ENCODE measurements at regions of chr19 and their contacts with region 1.

Region 1: DNA sequence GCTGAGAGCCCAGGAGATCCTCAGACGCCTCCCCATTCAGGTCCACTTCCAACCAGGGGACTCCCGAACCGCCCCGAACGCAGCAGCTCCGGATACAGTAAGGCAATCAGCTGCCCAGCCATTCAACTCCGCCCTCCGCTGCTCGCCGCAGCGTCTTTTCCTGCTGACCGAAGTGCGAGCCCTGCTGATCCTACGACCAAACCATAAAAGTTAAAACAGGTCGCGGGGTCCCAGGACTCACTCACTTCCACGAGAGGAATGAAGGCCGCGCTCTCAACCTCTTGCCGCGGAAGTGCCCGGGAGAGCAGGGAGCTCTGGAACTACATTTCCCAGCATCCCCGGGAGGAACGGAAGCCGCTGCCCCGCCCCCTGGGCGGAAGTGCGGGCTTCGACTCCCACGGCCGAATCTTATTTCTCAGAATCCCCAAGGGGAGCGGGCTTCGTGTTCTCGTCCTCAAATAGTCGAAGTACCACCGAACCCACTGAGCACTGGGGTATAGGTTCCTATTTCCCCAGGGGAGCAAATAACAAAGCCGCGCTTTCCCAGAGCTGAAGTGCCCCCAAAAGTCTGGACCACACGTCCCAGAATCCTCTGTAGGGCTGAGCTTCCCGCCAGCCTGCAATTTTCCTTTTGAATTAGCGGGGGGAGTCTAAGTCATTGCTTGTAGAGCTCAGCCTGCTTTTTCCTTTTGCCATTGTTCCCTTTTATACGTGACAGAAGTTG is at the start of gene ZNF45:
- DNase-seq: peak; percentile 85
- ATAC-seq: peak; percentile 97
- H3K4me3 ChIP-seq: peak within 1 kb of the TSS; percentile 59
- H3K27ac ChIP-seq: peak within 1 kb of the TSS; percentile 85
- H3K4me1 ChIP-seq: no peaks in the 10 kb centered on the region
- H3K27me3 ChIP-seq: no peaks in the 10 kb centered on the region
- CTCF ChIP-seq: no peak
- POLR2A ChIP-seq: no peak
- RAD21 ChIP-seq: peak; percentile 23; the same call in 1 of the 2 replicates
- total RNA-seq, gene ZNF45: 15.0 and 18.1 TPM in 2 replicates

Region 2: DNA sequence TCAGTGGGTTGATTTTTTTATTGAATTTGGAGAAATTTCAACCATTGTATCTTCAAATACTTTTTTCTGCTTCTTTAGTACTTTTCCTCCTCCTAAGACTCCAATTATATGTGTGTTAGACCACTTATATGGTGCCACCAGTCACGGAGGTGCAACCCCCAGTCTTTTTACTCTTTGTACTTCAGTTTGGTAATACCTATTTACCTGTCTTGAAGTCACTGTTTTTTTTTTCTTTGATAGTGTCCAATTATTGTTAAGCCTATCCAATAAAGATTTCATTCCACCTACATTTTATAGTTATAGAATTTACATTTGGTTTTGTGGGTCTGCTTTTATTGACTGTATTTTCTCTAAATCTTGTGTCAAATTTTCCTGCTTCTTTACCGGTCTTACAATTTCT is 93.1 kb before region 1 on chr19:
- CTCF ChIA-PET with region 1: no interaction called
- POLR2A ChIA-PET with region 1: no interaction called
- dilution Hi-C with region 1: no loop called
- in situ Hi-C with region 1: no loop called
- intact Hi-C with region 1: no loop called
- DNase-seq: no peak
- ATAC-seq: no peak
- H3K4me3 ChIP-seq: no peak overlapping the region
- H3K27ac ChIP-seq: no peak overlapping the region
- H3K4me1 ChIP-seq: no peaks in the 10 kb centered on the region
- H3K27me3 ChIP-seq: no peaks in the 10 kb centered on the region
- CTCF ChIP-seq: no peak
- POLR2A ChIP-seq: no peak
- RAD21 ChIP-seq: no peak

Region 3: GRCh38 chr19:43913383-43913782 is 21.8 kb before region 1 on chr19:
- CTCF ChIA-PET with region 1: no interaction called
- POLR2A ChIA-PET with region 1: no interaction called
- dilution Hi-C with region 1: no loop called
- in situ Hi-C with region 1: no loop called
- intact Hi-C with region 1: no loop called
- DNase-seq: no peak
- ATAC-seq: no peak
- H3K4me3 ChIP-seq: no peak overlapping the region
- H3K27ac ChIP-seq: no peak overlapping the region
- H3K4me1 ChIP-seq: no peaks in the 10 kb centered on the region
- H3K27me3 ChIP-seq: no peaks in the 10 kb centered on the region
- CTCF ChIP-seq: no peak
- POLR2A ChIP-seq: no peak
- RAD21 ChIP-seq: no peak

Region 4: DNA sequence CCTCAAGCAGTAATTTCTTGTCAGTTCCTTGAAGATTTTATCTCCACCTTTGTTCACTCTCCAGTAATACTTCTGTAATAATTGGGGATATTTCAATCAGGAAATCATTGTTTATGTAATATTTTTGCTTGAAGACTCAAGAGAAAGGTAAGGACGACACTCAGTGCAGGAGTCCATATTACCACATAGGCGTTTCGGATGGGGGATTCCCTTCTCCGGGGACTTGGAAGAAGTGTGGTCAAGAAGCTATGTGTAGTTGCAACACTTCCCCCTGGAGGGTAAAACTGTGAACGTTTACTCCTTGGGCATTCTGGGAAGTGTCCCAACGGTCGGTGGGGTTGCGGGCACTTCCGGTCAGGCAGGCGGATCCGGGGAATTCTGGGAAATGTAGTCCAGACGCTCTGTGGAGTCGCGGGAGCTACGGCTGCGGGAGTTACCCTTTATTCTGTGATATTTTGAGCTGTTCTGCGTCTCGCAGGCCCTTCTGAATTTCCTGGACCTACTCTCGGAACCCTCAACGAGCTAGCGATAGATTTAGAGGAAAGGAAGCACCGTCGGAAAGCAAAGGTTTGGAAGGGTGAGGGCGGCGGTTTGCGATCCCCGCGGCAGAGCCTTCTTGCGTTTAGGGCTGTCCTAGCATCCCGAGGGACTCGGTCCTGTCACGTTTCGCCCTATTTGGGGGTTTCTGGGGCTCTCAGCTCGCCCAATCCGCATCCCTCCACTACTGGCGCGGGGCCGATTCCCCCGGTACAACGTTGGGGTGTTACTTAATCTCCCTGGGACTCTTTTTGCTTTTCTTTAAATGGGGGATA is 15.9 kb after region 1 on chr19 and contains the start of gene ZNF221:
- CTCF ChIA-PET with region 1: interaction called, 7 read pairs
- POLR2A ChIA-PET with region 1: no interaction called
- dilution Hi-C with region 1: no loop called
- in situ Hi-C with region 1: no loop called
- intact Hi-C with region 1: loop called (anchors 1 kb)
- DNase-seq: peak; percentile 99
- ATAC-seq: peak; percentile 99
- H3K4me3 ChIP-seq: peak within 1 kb of the TSS; percentile 68
- H3K27ac ChIP-seq: peak within 1 kb of the TSS; percentile 81
- H3K4me1 ChIP-seq: no peaks in the 10 kb centered on the region
- H3K27me3 ChIP-seq: no peaks in the 10 kb centered on the region
- CTCF ChIP-seq: peak; percentile 57
- POLR2A ChIP-seq: no peak
- RAD21 ChIP-seq: peak; percentile 44
- total RNA-seq, gene ZNF221: 10.3 and 10.6 TPM in 2 replicates

Region 5: DNA sequence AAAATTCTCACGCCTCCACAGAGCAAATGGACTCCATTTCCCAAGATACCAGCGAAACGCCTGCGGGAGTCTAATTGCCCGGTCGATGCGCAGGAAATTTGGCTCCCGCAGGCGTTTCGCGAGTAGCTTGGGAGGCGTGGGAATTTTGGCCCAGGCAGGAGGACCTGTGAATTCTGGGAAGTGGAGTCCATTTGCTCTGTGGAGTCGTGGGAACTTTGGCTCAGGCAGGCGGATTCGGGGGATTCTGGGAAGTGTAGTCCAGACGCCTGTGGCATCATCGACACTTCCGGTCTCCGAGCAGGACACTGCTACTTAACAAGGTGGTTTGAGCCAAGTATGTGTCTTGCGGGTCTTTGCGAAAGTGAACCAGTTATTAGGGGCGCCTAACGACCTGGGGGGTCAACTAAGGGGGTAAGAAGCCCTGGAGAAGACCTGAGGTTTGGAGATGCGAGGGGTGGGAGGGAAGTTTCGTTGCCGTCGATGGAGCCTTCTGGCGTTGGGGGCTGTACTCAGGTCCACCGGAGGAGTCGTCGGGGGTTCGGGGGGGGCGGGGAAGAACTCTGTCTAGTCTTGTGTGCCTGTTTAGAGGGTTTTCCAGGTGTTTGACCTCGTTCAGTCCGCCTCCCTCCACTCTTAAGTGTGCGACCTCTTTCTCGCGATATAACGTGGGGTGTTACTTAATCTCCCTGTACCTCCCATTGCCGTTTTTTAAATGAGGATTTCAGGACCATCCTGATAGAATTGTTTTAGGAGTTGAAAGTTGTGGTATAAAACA is 49.0 kb after region 1 on chr19 and contains the start of gene ZNF155:
- CTCF ChIA-PET with region 1: no interaction called
- POLR2A ChIA-PET with region 1: no interaction called
- dilution Hi-C with region 1: no loop called
- in situ Hi-C with region 1: no loop called
- intact Hi-C with region 1: loop called (anchors 1 kb)
- DNase-seq: peak; percentile 97
- ATAC-seq: peak; percentile 95
- H3K4me3 ChIP-seq: peak within 1 kb of the TSS; percentile 79
- H3K27ac ChIP-seq: peak within 1 kb of the TSS; percentile 62
- H3K4me1 ChIP-seq: no peaks in the 10 kb centered on the region
- H3K27me3 ChIP-seq: no peaks in the 10 kb centered on the region
- CTCF ChIP-seq: no peak
- POLR2A ChIP-seq: no peak
- RAD21 ChIP-seq: no peak; the same call in 1 of the 2 replicates
- total RNA-seq, gene ZNF155: 9.0 and 10.8 TPM in 2 replicates

Region 6: DNA sequence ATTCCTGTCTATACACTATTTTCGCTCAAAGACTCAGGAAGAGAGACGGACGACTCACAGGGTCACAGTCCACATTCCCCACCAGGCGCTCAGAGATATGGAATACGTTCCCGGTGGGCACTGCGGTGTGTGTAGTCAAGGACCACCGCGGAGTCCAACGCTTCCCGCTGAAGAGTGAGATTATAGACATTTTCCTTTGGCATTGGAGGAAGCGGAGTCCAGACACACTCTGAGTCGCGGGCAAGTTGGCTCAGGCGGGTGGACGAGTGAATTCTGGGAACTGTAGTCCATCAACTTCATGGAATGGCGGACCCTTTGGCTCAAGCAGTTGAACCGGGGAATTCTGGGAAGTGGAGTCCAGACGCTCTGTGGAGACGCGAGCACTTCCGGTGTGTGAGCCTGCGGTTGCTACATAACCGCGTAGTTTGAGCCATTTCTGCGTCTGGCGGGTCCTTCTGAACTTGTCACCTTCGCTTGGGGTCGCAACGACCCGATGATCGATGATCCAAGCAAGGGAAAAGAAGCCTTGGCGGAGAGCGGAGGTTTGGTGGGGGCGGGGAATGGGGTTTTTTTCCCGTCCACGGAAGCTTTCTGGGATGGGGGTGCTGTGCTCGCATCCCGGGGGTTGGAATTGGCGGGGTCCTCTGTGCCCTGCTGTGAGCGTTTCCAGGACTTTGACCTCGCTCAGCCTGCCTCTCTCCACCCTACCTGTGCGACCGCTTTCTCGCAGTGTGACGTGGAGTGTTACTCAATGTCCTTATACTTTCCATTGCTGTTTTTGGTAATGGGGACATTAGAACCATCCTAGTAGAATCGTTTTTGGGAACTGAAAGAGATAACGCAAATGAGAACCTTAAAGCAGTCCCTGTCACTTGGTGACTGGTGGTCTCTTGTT is 67.7 kb after region 1 on chr19 and contains the start of gene ZNF230:
- CTCF ChIA-PET with region 1: no interaction called
- POLR2A ChIA-PET with region 1: no interaction called
- dilution Hi-C with region 1: no loop called
- in situ Hi-C with region 1: no loop called
- intact Hi-C with region 1: loop called (anchors 2 kb)
- DNase-seq: peak; percentile 95
- ATAC-seq: peak; percentile 97
- H3K4me3 ChIP-seq: peak within 1 kb of the TSS; percentile 68
- H3K27ac ChIP-seq: peak within 1 kb of the TSS; percentile 70
- H3K4me1 ChIP-seq: peaks cover 2% of the 10 kb centered on the region; the same call in 1 of the 2 replicates
- H3K27me3 ChIP-seq: no peaks in the 10 kb centered on the region
- CTCF ChIP-seq: no peak
- POLR2A ChIP-seq: peak; percentile 36; the same call in 1 of the 2 replicates
- RAD21 ChIP-seq: no peak
- total RNA-seq, gene ZNF230: 3.4 and 5.0 TPM in 2 replicates

Region 7: GRCh38 chr19:44093931-44094765 is 159.0 kb after region 1 on chr19 and contains the start of gene ZNF224:
- CTCF ChIA-PET with region 1: no interaction called
- POLR2A ChIA-PET with region 1: no interaction called
- dilution Hi-C with region 1: no loop called
- in situ Hi-C with region 1: no loop called
- intact Hi-C with region 1: loop called (anchors 10 kb)
- DNase-seq: peak; percentile 90
- ATAC-seq: peak; percentile 98
- H3K4me3 ChIP-seq: peak within 1 kb of the TSS; percentile 83
- H3K27ac ChIP-seq: peak within 1 kb of the TSS; percentile 66
- H3K4me1 ChIP-seq: no peaks in the 10 kb centered on the region
- H3K27me3 ChIP-seq: no peaks in the 10 kb centered on the region
- CTCF ChIP-seq: no peak
- POLR2A ChIP-seq: peak; percentile 55; the same call in 1 of the 2 replicates
- RAD21 ChIP-seq: no peak
- total RNA-seq, gene ZNF224: 24.4 and 26.3 TPM in 2 replicates

Measured in IMR-90 (cell line).